ENCODE measurements at regions of chr1 and their contacts with region 1.

Region 1: DNA sequence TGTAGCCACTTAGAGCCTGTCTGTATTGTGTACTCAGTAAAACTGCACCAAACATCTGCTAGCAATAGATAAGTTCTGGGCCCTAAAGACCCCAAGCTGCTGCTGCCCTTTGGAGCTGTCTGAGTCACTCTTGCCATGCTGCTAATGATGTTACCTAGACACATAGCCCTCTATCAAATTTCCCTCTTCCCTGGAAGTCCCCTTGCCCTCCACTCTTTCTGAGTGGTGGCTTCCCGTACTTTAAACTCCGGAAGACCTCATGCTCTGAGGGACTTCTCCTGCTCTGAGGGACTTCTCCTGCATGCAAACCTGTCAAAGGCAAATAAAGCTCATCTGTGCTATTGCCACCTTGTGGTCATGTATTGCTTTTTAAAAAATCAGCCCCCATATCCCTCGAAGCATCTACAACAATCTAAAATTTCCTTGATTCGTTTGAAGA is 34.0 kb downstream of the FH start:
- DNase-seq: peak; percentile 44
- H3K4me3 ChIP-seq: no peak overlapping the region
- H3K27ac ChIP-seq: no peak overlapping the region
- H3K4me1 ChIP-seq: peaks cover 40% of the 10 kb centered on the region
- H3K27me3 ChIP-seq: no peaks in the 10 kb centered on the region
- CTCF ChIP-seq: peak; percentile 49 to 53
- POLR2A ChIP-seq: no peak

Region 2: GRCh38 chr1:240027059-240027462 is 1458.5 kb before region 1 on chr1:
- CTCF ChIA-PET with region 1: no interaction called
- POLR2A ChIA-PET with region 1: no interaction called
- dilution Hi-C with region 1: no loop called
- intact Hi-C with region 1: loop called (anchors 10 kb)
- DNase-seq: peak; percentile 44
- H3K4me3 ChIP-seq: no peak overlapping the region
- H3K27ac ChIP-seq: no peak overlapping the region
- H3K4me1 ChIP-seq: peaks cover 18% of the 10 kb centered on the region
- H3K27me3 ChIP-seq: no peaks in the 10 kb centered on the region
- CTCF ChIP-seq: peak; percentile 80 to 88
- POLR2A ChIP-seq: no peak

Region 3: GRCh38 chr1:240765732-240766363 is 719.7 kb before region 1 on chr1:
- CTCF ChIA-PET with region 1: no interaction called
- POLR2A ChIA-PET with region 1: no interaction called
- dilution Hi-C with region 1: no loop called
- intact Hi-C with region 1: loop called (anchors 1 kb)
- DNase-seq: peak; percentile 75
- H3K4me3 ChIP-seq: no peak overlapping the region
- H3K27ac ChIP-seq: peak overlapping the region; percentile 89
- H3K4me1 ChIP-seq: peaks cover 20% of the 10 kb centered on the region
- H3K27me3 ChIP-seq: no peaks in the 10 kb centered on the region
- CTCF ChIP-seq: no peak
- POLR2A ChIP-seq: no peak

Region 4: GRCh38 chr1:240888039-240888786 is 597.4 kb before region 1 on chr1:
- CTCF ChIA-PET with region 1: interaction called, 39 read pairs
- POLR2A ChIA-PET with region 1: no interaction called
- dilution Hi-C with region 1: no loop called
- intact Hi-C with region 1: loop called (anchors 1 kb)
- DNase-seq: peak; percentile 36
- H3K4me3 ChIP-seq: no peak overlapping the region
- H3K27ac ChIP-seq: no peak overlapping the region
- H3K4me1 ChIP-seq: no peaks in the 10 kb centered on the region
- H3K27me3 ChIP-seq: no peaks in the 10 kb centered on the region
- CTCF ChIP-seq: peak; percentile 68 to 72
- POLR2A ChIP-seq: no peak

Region 5: DNA sequence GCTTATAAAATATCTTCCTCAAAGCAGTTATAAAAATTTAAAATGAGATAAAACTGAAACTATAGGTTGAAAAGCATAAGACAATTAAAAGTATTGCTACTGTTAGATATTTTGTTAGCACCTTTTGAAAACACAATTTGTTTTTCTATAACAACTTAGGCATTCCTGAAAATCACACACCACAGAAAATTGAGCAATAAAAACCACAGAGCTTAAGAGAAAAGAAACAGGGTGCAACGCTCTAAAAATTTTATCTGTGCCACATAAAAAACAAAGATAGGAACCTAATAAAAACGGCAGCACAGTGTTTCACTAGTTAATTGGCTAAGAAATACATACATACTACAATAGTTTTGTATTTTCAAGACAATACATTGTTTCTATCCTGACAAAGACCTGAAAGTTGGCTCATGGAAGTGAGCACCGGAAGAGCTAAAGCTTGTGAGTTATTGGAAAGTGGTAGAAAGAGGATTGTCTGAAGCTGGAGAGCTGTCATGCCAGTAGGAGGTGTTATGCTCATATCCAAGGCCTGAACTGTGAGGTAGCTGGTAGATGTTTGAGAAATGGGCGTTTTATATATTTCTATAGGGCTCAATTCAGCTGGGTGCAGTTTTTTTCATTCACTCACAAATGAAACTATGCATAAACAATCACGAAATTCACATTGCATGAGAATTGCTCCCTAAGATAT is 174.4 kb before region 1 on chr1:
- CTCF ChIA-PET with region 1: interaction called, 14 read pairs
- POLR2A ChIA-PET with region 1: no interaction called
- dilution Hi-C with region 1: no loop called
- intact Hi-C with region 1: no loop called
- DNase-seq: no peak
- H3K4me3 ChIP-seq: no peak overlapping the region
- H3K27ac ChIP-seq: no peak overlapping the region
- H3K4me1 ChIP-seq: no peaks in the 10 kb centered on the region
- H3K27me3 ChIP-seq: no peaks in the 10 kb centered on the region
- CTCF ChIP-seq: no peak
- POLR2A ChIP-seq: no peak

Region 6: DNA sequence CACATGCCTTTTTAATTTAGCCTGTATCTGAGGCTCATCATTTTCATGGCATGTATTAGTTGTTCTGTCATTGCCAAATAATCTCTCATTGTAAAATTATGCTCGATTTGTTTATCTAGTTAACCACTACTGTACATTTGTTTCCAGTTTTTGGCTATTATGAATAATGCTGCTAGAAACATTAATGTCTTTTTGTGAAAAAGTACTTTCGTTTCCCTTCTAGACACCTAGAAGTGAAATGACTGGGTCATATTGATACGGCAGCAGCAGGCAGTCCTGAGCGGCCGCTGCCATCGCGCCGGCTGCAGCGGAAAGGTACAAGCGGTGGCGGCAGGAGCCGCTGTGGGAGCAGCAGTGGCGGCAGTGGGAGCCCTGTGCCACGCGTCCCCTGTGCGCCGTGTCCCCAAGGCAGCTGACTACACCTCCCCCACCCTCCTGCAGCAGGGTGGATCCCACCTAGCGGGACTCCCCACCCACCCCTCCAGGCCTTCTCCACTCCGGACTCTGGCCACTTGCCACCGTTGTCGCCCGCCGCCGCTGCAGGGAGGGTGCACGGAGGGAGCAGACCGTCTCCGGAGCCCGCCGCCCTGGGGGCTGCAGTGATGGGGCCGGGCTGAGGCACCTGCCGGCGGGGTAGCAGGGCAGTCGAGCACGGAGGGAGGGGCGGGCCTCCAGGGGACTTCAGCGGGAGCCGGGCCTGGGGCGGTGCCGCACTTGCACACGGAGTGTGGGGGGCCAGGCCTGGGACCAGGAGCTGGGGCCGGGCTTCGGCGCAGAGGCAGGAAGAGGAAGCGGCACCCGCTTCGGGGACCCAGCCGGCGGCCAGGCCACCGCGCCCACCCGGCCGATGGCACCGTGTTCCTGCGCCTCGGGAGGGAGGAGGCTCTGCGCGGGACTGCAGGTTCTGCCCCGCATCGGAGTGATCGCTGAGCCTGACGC is 61.8 kb before region 1 on chr1:
- CTCF ChIA-PET with region 1: interaction called, 12 read pairs
- POLR2A ChIA-PET with region 1: no interaction called
- dilution Hi-C with region 1: no loop called
- intact Hi-C with region 1: loop called (anchors 1 kb)
- DNase-seq: peak; percentile 33
- H3K4me3 ChIP-seq: peak overlapping the region; percentile 59 to 64 (median 60)
- H3K27ac ChIP-seq: no peak overlapping the region
- H3K4me1 ChIP-seq: peaks cover 6% of the 10 kb centered on the region
- H3K27me3 ChIP-seq: no peaks in the 10 kb centered on the region
- CTCF ChIP-seq: no peak
- POLR2A ChIP-seq: no peak

Region 7: GRCh38 chr1:241507189-241507863 is 21.8 kb after region 1 on chr1:
- CTCF ChIA-PET with region 1: interaction called, 7 read pairs
- POLR2A ChIA-PET with region 1: no interaction called
- dilution Hi-C with region 1: no loop called
- intact Hi-C with region 1: loop called (anchors 2 kb)
- DNase-seq: peak; percentile 36
- H3K4me3 ChIP-seq: no peak overlapping the region
- H3K27ac ChIP-seq: peak overlapping the region; percentile 45
- H3K4me1 ChIP-seq: peaks cover 26% of the 10 kb centered on the region
- H3K27me3 ChIP-seq: no peaks in the 10 kb centered on the region
- CTCF ChIP-seq: no peak
- POLR2A ChIP-seq: no peak

Region 8: DNA sequence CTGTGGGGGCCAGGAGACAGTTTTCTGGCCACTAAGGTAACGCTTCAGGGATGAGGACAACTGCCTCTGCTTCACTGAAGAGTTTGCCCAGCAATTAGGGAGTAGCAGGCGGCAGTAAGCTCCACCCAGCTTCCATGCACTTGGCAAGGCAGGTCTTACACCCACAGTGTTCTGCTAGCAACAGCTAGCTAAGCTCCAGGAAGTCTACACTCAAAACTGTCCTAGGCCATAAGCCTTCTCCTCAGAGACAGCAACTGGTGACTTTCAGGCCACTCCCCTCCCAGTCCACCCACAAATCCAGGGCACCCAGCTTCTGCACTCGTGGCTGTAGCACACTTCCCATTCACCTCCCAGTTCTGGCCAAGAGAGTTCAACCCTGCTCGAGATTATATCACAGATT is 93.9 kb after region 1 on chr1:
- CTCF ChIA-PET with region 1: no interaction called
- POLR2A ChIA-PET with region 1: no interaction called
- dilution Hi-C with region 1: no loop called
- intact Hi-C with region 1: no loop called
- DNase-seq: no peak
- H3K4me3 ChIP-seq: no peak overlapping the region
- H3K27ac ChIP-seq: no peak overlapping the region
- H3K4me1 ChIP-seq: no peaks in the 10 kb centered on the region
- H3K27me3 ChIP-seq: no peaks in the 10 kb centered on the region
- CTCF ChIP-seq: no peak
- POLR2A ChIP-seq: no peak

Measured in endothelial cell of umbilical vein (primary cell).